ENCODE measurements at regions of chr5 and their contacts with region 1.

Region 1: GRCh38 chr5:122774861-122775549 is at the start of gene SNX2:
- DNase-seq: peak; percentile 65 to 88
- H3K4me3 ChIP-seq: peak within 1 kb of the TSS; percentile 87
- H3K27ac ChIP-seq: no peak within 1 kb of the TSS
- H3K4me1 ChIP-seq: peaks cover 19% of the 10 kb centered on the region
- H3K27me3 ChIP-seq: no peaks in the 10 kb centered on the region
- CTCF ChIP-seq: no peak; the same call in 1 of the 2 replicates
- total RNA-seq, gene SNX2: 36.7 and 42.4 TPM in 2 replicates

Region 2: DNA sequence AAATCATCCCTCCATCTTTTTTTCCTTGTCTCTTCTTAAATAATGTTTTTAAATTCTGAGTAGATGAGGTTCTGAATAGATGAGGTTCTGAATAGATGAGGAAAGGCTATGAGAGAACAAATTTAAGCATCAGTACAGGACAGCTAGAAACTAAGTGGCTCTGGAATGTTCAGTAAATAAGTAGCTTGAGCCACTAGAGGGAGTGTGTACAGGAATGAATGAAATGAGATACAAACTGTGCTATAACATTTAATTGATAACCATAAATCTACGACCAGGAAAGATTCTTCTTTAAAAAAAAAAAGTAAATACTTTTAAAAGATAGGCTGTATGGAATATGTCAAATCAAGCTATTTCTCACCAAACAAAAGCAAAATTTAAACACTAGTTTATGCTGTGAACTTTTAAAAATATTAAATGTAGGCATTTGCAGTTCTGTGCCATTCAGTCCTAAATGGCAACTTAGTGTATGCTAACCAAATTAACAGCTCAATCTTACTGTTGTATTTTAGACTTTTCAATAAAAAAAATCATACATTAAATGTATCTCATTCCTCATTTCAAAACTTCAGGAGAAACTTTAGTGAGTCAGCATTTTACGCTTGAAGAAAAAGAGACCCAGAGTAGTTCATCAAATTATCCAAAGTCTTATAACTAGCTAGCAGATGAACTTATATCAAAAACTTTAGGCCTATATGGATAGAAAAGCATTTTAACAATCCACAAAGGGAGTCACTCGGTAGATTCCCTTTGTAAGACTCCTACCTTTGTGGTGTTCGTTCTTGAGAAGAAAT is 70.6 kb before region 1 on chr5:
- CTCF ChIA-PET with region 1: no interaction called
- POLR2A ChIA-PET with region 1: no interaction called
- intact Hi-C with region 1: loop called (anchors 10 kb)
- DNase-seq: no peak
- H3K4me3 ChIP-seq: no peak overlapping the region
- H3K27ac ChIP-seq: no peak overlapping the region
- H3K4me1 ChIP-seq: no peaks in the 10 kb centered on the region
- H3K27me3 ChIP-seq: no peaks in the 10 kb centered on the region
- CTCF ChIP-seq: peak; percentile 73

Region 3: GRCh38 chr5:122736086-122736845 is 38.7 kb before region 1 on chr5:
- CTCF ChIA-PET with region 1: no interaction called
- POLR2A ChIA-PET with region 1: no interaction called
- intact Hi-C with region 1: no loop called
- DNase-seq: no peak
- H3K4me3 ChIP-seq: no peak overlapping the region
- H3K27ac ChIP-seq: no peak overlapping the region
- H3K4me1 ChIP-seq: no peaks in the 10 kb centered on the region
- H3K27me3 ChIP-seq: no peaks in the 10 kb centered on the region
- CTCF ChIP-seq: no peak

Region 4: GRCh38 chr5:122751293-122751753 is 23.7 kb before region 1 on chr5:
- CTCF ChIA-PET with region 1: no interaction called
- POLR2A ChIA-PET with region 1: interaction called, 3 read pairs
- intact Hi-C with region 1: loop called (anchors 1 kb)
- DNase-seq: peak; percentile 74 to 80
- H3K4me3 ChIP-seq: no peak overlapping the region
- H3K27ac ChIP-seq: 0 out of 2 replicates have a peak overlapping the region, but pooled peaks have one; percentile 16
- H3K4me1 ChIP-seq: peaks cover 14% of the 10 kb centered on the region; the same call in 1 of the 2 replicates
- H3K27me3 ChIP-seq: no peaks in the 10 kb centered on the region
- CTCF ChIP-seq: no peak

Region 5: GRCh38 chr5:122845229-122846050 is 70.4 kb after region 1 on chr5 and contains the start of gene SNX24:
- CTCF ChIA-PET with region 1: no interaction called
- POLR2A ChIA-PET with region 1: no interaction called
- intact Hi-C with region 1: loop called (anchors 2 kb)
- DNase-seq: peak; percentile 70 to 76
- H3K4me3 ChIP-seq: peak within 1 kb of the TSS; percentile 64
- H3K27ac ChIP-seq: peak within 1 kb of the TSS; percentile 87
- H3K4me1 ChIP-seq: peaks cover 55% of the 10 kb centered on the region
- H3K27me3 ChIP-seq: no peaks in the 10 kb centered on the region
- CTCF ChIP-seq: no peak
- total RNA-seq, gene SNX24: 21.5 and 22.3 TPM in 2 replicates

Region 6: DNA sequence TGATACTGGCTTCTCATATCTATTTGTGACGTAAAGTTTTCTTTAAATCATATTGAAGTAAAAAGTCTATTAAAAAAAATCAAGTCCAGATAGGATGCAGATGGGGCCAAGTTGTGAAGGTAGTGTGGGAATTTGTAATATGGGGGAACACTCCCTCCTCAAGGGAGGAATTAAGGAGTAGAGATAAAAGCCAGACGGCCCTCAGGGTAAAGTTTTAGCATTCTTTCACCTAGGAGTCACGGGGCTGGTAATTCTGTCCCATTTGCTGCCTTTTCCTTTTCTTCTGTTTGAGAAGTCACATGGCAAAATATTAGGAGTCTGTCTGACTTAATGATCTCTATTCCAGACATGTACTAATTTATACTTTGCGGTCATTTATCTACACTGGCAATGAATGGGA is 132.2 kb after region 1 on chr5:
- CTCF ChIA-PET with region 1: no interaction called
- POLR2A ChIA-PET with region 1: no interaction called
- intact Hi-C with region 1: loop called (anchors 10 kb)
- DNase-seq: peak; percentile 47 to 72
- H3K4me3 ChIP-seq: no peak overlapping the region
- H3K27ac ChIP-seq: peak overlapping the region; percentile 40
- H3K4me1 ChIP-seq: peaks cover 15% of the 10 kb centered on the region
- H3K27me3 ChIP-seq: no peaks in the 10 kb centered on the region
- CTCF ChIP-seq: no peak

Region 7: DNA sequence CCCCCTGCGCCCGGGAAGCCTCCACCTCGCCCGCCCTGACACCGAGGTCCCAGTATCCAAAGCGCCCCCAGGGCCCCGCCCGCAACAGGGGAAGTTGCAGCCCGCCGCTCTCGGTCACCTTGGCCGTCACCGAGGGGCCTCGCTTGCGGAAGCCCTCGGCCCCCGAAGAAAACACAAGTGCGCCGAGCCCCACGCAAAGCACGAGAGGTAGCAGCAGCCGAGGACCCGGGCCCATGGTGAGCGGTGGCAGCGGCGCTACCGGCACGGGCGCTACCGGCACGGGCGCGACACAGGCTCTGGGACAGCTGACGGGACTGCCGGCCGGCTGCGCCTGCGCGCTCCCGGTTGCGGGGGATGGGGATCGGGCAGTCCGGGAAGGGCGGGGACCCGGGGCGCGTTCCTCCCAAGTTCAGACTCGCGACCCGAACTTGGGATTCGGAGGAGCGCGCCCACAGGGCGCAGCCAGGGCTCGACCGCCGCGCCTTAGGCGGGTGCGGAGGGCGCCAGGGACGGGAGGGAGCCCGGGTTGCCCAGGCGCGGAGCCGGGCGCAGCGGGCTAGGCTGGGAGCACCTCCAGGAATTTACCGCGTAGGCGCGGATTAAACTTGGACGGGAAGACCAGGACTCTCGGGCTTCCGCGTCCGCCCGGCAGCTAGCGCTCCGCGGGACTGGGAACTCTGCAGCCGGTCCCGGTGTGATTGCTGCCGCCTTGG is 261.5 kb after region 1 on chr5 and contains the start of gene PPIC:
- CTCF ChIA-PET with region 1: no interaction called
- POLR2A ChIA-PET with region 1: no interaction called
- intact Hi-C with region 1: loop called (anchors 5 kb)
- DNase-seq: peak; percentile 54 to 90
- H3K4me3 ChIP-seq: peak within 1 kb of the TSS; percentile 98
- H3K27ac ChIP-seq: peak within 1 kb of the TSS; percentile 36
- H3K4me1 ChIP-seq: peaks cover 5% of the 10 kb centered on the region
- H3K27me3 ChIP-seq: no peaks in the 10 kb centered on the region
- CTCF ChIP-seq: no peak
- total RNA-seq, gene PPIC: 22.3 and 27.4 TPM in 2 replicates

Region 8: DNA sequence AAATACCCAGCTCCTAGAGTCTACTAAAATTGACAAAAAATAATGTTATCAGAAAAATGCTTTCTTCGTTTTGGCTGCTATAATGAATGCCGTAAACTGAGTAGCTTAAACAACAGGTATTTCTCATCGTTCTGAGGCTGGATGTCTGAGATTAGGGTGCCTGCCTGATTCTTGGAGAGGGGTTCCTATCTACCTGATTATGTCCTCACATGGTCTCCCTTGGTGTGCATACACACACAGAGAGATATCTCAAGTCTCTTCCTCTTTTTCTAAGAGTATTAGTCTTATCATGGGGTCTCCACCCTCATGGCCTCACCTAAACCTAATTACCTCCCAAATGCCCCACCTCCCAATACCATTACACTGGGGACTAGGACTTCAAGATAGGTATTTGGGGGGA is 696.4 kb after region 1 on chr5:
- CTCF ChIA-PET with region 1: no interaction called
- POLR2A ChIA-PET with region 1: no interaction called
- intact Hi-C with region 1: no loop called
- DNase-seq: no peak
- H3K4me3 ChIP-seq: no peak overlapping the region
- H3K27ac ChIP-seq: no peak overlapping the region
- H3K4me1 ChIP-seq: no peaks in the 10 kb centered on the region
- H3K27me3 ChIP-seq: no peaks in the 10 kb centered on the region
- CTCF ChIP-seq: no peak

Measured in PC-9 (cell line).